ENCODE measurements at regions of chr5 and their contacts with region 1.

Region 1: DNA sequence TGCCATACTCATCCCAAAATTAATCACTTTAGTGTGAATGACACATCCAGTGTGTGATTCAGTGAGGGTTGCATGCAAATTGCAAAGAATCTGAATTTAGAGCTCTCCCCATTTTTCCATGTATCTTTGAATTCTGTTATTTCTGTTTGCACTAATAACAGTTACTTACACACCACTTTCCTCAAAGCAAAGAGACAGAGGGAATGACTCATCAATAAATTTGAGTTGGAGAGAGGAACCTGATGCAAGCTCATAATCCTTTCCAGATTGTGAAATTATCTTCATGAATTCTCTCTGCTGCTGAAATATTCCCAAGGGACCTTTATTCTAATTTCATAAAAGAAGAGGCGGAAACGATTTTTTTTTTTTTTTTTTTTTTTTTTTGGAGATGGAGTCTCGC is 204.8 kb downstream of the CDH9 start:
- DNase-seq: no peak
- ATAC-seq: no peak
- H3K4me3 ChIP-seq: no peak overlapping the region
- H3K27ac ChIP-seq: no peak overlapping the region
- H3K4me1 ChIP-seq: no peaks in the 10 kb centered on the region
- H3K27me3 ChIP-seq: no peaks in the 10 kb centered on the region
- CTCF ChIP-seq: no peak

Region 2: GRCh38 chr5:26843677-26844076 is 10.1 kb after region 1 on chr5:
- CTCF ChIA-PET with region 1: no interaction called
- POLR2A ChIA-PET with region 1: no interaction called
- in situ Hi-C with region 1: no loop called
- intact Hi-C with region 1: loop called (anchors 1 kb)
- DNase-seq: no peak
- ATAC-seq: no peak
- H3K4me3 ChIP-seq: no peak overlapping the region
- H3K27ac ChIP-seq: peak overlapping the region; percentile 25; the same call in 1 of the 2 replicates
- H3K4me1 ChIP-seq: peaks cover 24% of the 10 kb centered on the region
- H3K27me3 ChIP-seq: no peaks in the 10 kb centered on the region
- CTCF ChIP-seq: no peak

Region 3: GRCh38 chr5:26903469-26903868 is 69.9 kb after region 1 on chr5:
- CTCF ChIA-PET with region 1: no interaction called
- POLR2A ChIA-PET with region 1: no interaction called
- in situ Hi-C with region 1: no loop called
- intact Hi-C with region 1: no loop called
- DNase-seq: no peak
- ATAC-seq: no peak
- H3K4me3 ChIP-seq: no peak overlapping the region
- H3K27ac ChIP-seq: no peak overlapping the region
- H3K4me1 ChIP-seq: no peaks in the 10 kb centered on the region
- H3K27me3 ChIP-seq: no peaks in the 10 kb centered on the region
- CTCF ChIP-seq: no peak

Region 4: GRCh38 chr5:27083449-27084415 is 250.1 kb after region 1 on chr5:
- CTCF ChIA-PET with region 1: no interaction called
- POLR2A ChIA-PET with region 1: no interaction called
- in situ Hi-C with region 1: no loop called
- intact Hi-C with region 1: no loop called
- DNase-seq: no peak
- ATAC-seq: no peak
- H3K4me3 ChIP-seq: no peak overlapping the region
- H3K27ac ChIP-seq: no peak overlapping the region
- H3K4me1 ChIP-seq: no peaks in the 10 kb centered on the region
- H3K27me3 ChIP-seq: no peaks in the 10 kb centered on the region
- CTCF ChIP-seq: no peak

Measured in Panc1 (cell line).